ENCODE measurements at regions of chr18 and their contacts with region 1.

Region 1: GRCh38 chr18:36284671-36285295 is 12.7 kb upstream of the FHOD3 start:
- DNase-seq: peak in 1 of 5 donors; percentile 66
- H3K4me3 ChIP-seq: no peak overlapping the region
- H3K27ac ChIP-seq: no peak overlapping the region
- H3K4me1 ChIP-seq: no peaks in the 10 kb centered on the region
- H3K27me3 ChIP-seq: no peaks in the 10 kb centered on the region
- CTCF ChIP-seq: peak; percentile 88 to 91 (median 91)
- EP300 ChIP-seq: no peak
- POLR2A ChIP-seq: peak; percentile 21

Region 2: GRCh38 chr18:36015629-36016028 is 269.2 kb before region 1 on chr18:
- intact Hi-C with region 1: loop called in 2 of 4 experiments (anchors 10 kb)
- DNase-seq: no peak
- H3K4me3 ChIP-seq: no peak overlapping the region
- H3K27ac ChIP-seq: no peak overlapping the region
- H3K4me1 ChIP-seq: no peaks in the 10 kb centered on the region
- H3K27me3 ChIP-seq: no peaks in the 10 kb centered on the region
- CTCF ChIP-seq: no peak
- EP300 ChIP-seq: no peak
- POLR2A ChIP-seq: no peak

Region 3: GRCh38 chr18:36095936-36096519 is 188.8 kb before region 1 on chr18:
- intact Hi-C with region 1: loop called in 3 of 4 experiments (anchors 5 kb)
- DNase-seq: no peak
- H3K4me3 ChIP-seq: no peak overlapping the region
- H3K27ac ChIP-seq: no peak overlapping the region
- H3K4me1 ChIP-seq: no peaks in the 10 kb centered on the region
- H3K27me3 ChIP-seq: no peaks in the 10 kb centered on the region
- CTCF ChIP-seq: peak; percentile 39 to 69 (median 49)
- EP300 ChIP-seq: no peak
- POLR2A ChIP-seq: no peak

Region 4: GRCh38 chr18:36101943-36102342 is 182.8 kb before region 1 on chr18:
- intact Hi-C with region 1: loop called in 3 of 4 experiments (anchors 5 kb)
- DNase-seq: no peak
- H3K4me3 ChIP-seq: no peak overlapping the region
- H3K27ac ChIP-seq: no peak overlapping the region
- H3K4me1 ChIP-seq: no peaks in the 10 kb centered on the region
- H3K27me3 ChIP-seq: no peaks in the 10 kb centered on the region
- CTCF ChIP-seq: no peak
- EP300 ChIP-seq: no peak
- POLR2A ChIP-seq: no peak

Region 5: GRCh38 chr18:36203360-36203895 is 81.4 kb before region 1 on chr18:
- intact Hi-C with region 1: loop called in 1 of 4 experiments (anchors 10 kb)
- DNase-seq: no peak
- H3K4me3 ChIP-seq: no peak overlapping the region
- H3K27ac ChIP-seq: no peak overlapping the region
- H3K4me1 ChIP-seq: no peaks in the 10 kb centered on the region
- H3K27me3 ChIP-seq: no peaks in the 10 kb centered on the region
- CTCF ChIP-seq: no peak
- EP300 ChIP-seq: no peak
- POLR2A ChIP-seq: no peak

Region 6: DNA sequence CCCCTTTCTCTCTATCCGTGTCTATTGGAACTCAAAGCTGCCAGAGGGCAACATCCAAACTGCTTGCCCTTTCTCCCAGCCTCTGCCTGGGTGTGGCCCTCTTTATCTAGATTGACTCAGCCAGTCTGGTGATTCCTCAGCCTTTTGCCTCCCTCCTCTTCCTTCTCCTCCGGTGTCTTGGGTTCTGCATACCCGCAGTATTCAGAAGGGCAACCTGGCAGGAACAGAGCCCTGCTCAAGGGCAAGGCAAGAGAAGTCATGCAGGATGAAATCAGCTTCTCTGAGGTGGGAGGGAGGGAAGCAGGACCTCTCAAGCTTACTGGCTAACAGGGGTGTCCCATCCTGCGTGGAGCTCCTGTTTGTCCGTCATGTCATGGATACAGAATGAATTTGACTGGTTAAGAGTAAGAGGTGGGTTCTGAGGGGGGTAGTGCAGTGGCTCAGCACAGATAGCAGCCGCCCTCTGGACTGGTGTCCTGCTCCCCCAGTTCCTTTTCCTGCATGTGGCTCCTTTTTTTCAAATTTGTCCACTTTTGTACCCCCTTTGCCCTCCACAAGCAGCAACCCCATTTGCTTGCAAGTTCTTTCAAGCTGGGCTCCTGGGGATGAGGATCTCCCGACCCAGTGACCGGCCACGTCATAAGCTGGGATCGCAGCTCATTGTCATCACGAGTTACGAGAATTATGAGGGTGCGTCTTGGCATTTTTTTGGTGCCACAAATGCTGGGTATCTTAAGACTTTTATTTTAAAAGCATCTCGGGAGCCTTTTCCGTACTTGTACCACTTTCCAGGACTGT is 166.9 kb after region 1 on chr18:
- intact Hi-C with region 1: no loop called
- DNase-seq: no peak
- H3K4me3 ChIP-seq: no peak overlapping the region
- H3K27ac ChIP-seq: no peak overlapping the region
- H3K4me1 ChIP-seq: peaks cover 3% of the 10 kb centered on the region
- H3K27me3 ChIP-seq: no peaks in the 10 kb centered on the region
- CTCF ChIP-seq: no peak
- EP300 ChIP-seq: no peak
- POLR2A ChIP-seq: no peak

Measured in ovary (tissue), 10 donors.